ENCODE measurements at regions of chr6 and their contacts with region 1.

Region 1: GRCh38 chr6:80605165-80605989 is 498.9 kb downstream of the BCKDHB start:
- DNase-seq: no peak
- ATAC-seq: no peak
- H3K4me3 Mint-ChIP-seq: no peak overlapping the region
- H3K27ac Mint-ChIP-seq: no peak overlapping the region
- H3K4me1 Mint-ChIP-seq: no peaks in the 10 kb centered on the region
- H3K27me3 Mint-ChIP-seq: no peaks in the 10 kb centered on the region

Region 2: DNA sequence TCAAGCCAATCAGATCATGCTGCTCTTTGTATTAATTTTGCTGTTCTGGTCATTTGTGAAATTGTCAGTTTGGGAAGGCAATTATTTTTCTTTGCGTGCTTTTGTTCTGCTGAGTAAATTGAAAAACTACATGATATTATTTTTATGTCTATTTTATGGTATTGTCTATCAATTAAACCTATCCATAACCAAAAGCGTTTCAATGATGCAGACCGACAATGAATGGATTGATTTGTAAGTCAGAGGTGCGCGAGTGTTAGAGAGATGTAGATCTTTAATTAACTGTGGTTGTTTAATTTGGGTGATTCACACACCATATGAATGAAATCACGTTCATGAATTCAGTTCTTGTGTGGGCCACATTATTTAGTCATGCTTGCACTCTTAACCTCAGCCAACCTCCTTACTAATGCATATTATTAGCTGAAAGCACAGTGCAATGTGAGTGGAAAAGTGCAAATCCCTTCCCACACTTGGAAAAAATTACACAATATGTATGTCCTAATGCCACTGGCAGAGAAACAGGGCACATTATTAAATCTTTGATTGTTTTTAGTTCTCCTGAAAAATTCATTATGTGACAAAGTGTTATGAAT is 13.5 kb after region 1 on chr6:
- CTCF ChIA-PET with region 1: no interaction called
- POLR2A ChIA-PET with region 1: no interaction called
- DNase-seq: no peak
- ATAC-seq: no peak
- H3K4me3 Mint-ChIP-seq: no peak overlapping the region
- H3K27ac Mint-ChIP-seq: no peak overlapping the region
- H3K4me1 Mint-ChIP-seq: no peaks in the 10 kb centered on the region
- H3K27me3 Mint-ChIP-seq: no peaks in the 10 kb centered on the region

Region 3: DNA sequence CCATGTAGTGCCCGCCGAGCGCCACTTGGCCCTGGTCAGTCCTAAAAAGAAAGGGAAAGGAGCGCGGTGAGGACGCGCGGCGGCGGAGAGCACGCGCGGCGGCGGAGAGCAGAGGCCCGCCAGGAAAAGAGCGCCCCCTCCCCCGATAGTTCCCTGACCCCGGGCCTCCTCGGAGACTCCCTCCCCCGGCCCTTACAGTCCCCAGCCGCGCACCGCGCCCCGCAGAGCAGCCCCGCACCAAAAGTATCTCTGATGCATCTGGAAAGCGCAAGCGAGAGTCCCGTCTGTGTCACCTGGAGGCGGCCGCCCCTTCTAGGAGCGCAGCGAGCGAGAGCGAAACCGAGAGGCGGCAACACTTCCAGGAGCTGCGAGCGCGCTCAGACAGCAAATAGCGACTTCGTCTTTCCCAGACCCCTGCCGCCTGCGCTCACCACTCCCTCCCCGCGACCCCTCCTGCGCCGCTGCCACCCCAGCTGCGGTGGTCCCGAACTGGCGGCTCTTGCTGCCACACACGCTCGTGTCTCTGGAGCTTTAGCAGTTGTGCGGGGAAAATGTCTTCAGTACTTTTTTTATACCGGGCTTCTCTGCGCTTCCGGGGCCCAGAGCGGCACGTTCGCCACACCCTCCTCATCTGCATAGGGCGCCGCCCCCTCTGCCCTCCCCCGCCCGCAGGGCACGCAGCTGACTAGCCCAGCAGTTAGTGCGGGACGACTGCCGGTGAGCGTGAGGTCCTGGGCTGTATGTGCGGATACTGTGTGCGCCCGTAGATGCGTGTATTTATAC is 1147.0 kb after region 1 on chr6 and contains the start of gene TENT5A:
- CTCF ChIA-PET with region 1: interaction called, 13 read pairs
- POLR2A ChIA-PET with region 1: no interaction called
- DNase-seq: peak; percentile 90
- ATAC-seq: peak; percentile 84
- H3K4me3 Mint-ChIP-seq: peak within 1 kb of the TSS; percentile 88
- H3K27ac Mint-ChIP-seq: peak within 1 kb of the TSS; percentile 86
- H3K4me1 Mint-ChIP-seq: peaks cover 32% of the 10 kb centered on the region
- H3K27me3 Mint-ChIP-seq: peaks cover 23% of the 10 kb centered on the region
- total RNA-seq, gene TENT5A: 1.7 to 1.9 TPM

Measured in activated CD8-positive, alpha-beta T cell treated with anti-CD3 and anti-CD28 coated beads, Interleukin-2, amount 10 ng/mL, durations not matched to agents 7 days and 5 days (primary cell).